Colonic mucosa (tissue), 4 donors: ENCODE measurements at regions of chr1 and their contacts with region 1.

Region 1: DNA sequence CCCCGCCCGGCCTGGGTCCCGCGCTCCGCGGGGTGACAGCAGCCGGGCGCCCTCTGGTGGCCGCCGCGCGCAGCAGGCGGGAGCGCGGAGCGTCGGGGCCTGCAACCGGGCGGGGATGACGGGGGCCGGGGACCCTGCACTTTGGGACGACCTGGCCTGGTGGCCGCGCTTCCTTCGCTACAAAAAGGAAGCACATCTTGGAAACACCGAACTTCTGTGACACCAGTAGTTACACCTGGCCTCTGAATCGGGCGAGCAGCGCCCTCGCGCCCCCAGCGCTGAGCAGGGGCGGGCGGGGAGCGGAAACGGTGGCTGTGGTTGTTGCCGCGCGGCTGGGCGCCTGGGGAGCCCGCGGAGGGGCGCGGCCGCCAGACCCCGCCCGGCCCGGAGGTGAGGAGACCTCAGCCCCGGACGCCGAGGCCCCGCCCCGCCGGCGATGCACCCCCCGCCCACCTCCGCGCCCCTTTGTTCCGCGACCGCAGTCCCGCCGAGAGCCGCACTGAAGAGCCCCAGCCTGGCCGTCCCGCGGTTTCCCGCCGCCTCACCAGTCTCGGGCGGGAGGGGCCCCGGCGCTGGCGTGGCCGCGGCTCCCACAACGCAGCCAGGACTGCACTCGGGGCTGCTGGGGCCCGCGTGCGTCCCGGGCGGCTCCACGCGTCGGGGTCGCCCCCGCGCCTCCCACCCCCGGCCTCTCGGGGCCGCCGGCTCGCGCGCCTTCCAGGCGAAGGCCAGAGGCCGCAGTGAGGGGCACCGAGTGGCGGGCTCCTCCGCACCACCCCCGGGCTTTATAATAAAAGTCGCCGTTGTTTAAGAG is 59.3 kb downstream of the H3-3A start:
- DNase-seq: peak; percentile 75
- H3K4me3 ChIP-seq: peak overlapping the region; percentile 66
- H3K27ac ChIP-seq: peak overlapping the region; percentile 98
- H3K4me1 ChIP-seq: peaks cover 6% of the 10 kb centered on the region
- H3K27me3 ChIP-seq: no peaks in the 10 kb centered on the region
- CTCF ChIP-seq: peak; percentile 60

Region 2: GRCh38 chr1:225567590-225568194 is 554.1 kb before region 1 on chr1:
- intact Hi-C with region 1: no loop called
- DNase-seq: no peak
- H3K4me3 ChIP-seq: no peak overlapping the region
- H3K27ac ChIP-seq: no peak overlapping the region
- H3K4me1 ChIP-seq: no peaks in the 10 kb centered on the region
- H3K27me3 ChIP-seq: no peaks in the 10 kb centered on the region
- CTCF ChIP-seq: no peak

Region 3: DNA sequence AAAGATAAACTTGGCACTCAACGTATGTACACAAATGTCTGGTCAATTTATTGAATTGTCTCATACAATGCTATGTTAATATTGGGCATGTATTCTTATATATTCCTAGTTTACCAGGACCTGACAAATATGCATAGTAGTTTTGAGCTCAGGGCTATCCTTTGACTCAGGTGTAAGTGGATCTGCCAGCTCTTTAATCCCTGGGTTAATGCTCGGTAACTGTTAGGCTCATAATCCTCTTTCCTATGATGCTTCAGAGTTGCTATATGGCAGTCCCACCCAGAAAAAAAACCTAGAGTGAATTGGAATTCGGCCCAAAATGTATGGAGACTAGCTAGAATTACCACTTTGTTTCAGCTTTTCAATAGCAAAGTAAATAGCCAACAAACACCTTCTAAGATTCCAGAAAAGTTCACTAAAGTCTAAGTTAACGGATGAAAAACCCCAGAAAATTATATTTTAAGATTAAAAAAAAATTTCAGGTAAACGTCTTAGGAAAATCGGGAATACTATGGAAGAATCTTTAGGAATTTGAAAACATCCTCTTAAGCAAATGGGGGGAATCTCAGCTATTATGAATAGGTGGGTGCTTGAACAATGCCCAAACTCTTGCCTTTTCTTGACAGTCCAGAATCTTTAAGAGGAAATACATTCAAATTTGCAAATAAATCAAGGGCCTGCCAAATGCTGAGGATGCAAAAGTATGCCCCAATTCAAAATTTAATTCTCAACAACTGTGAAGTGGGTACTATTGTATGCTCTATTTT is 48.4 kb before region 1 on chr1:
- intact Hi-C with region 1: no loop called
- DNase-seq: no peak
- H3K4me3 ChIP-seq: no peak overlapping the region
- H3K27ac ChIP-seq: no peak overlapping the region
- H3K4me1 ChIP-seq: no peaks in the 10 kb centered on the region
- H3K27me3 ChIP-seq: no peaks in the 10 kb centered on the region
- CTCF ChIP-seq: no peak

Region 4: DNA sequence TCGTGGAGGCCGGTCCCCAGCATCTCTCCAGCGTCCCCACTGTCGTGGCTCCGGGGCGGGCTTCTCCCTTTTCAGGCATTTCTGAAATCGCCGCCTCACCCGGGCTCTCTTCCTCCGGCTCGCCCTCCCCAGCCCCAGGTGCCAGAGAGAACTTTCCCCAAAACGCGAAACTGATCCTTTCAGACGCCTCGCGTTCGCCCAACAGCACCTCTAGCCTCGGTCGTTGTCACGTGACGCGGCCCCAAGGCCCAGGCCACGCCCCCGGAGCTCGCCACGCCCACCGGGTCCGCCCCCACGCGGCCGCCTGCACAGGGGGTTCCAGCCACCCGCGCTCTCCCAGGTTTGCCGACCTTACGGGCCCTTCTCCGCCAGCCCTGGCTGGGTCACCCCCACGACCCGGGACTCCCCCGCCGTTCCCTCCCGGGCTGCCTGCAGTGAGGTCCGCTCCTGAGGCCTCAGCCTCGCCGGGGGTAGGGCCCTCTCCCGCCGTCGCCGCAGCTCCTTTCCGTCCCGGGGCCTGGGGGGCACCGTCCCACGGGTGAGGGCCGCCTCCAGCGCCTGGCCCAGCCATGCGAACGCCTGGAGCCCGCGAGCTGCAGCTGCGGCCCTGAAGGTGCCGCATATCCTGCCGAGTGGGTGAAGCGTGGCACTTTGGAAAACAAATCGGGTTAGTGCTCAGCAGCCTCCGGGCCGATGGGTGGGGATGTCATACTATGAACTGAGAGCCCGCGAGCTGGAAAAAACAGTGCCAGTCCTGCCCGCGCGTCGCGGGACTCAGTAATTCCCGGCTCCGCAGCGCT is 38.3 kb before region 1 on chr1:
- intact Hi-C with region 1: loop called (anchors 5 kb)
- DNase-seq: peak; percentile 97
- H3K4me3 ChIP-seq: peak overlapping the region; percentile 89
- H3K27ac ChIP-seq: peak overlapping the region; percentile 61
- H3K4me1 ChIP-seq: no peaks in the 10 kb centered on the region
- H3K27me3 ChIP-seq: no peaks in the 10 kb centered on the region
- CTCF ChIP-seq: no peak

Region 5: GRCh38 chr1:226308723-226309315 is 187.0 kb after region 1 on chr1 and contains the start of gene LIN9:
- intact Hi-C with region 1: no loop called
- DNase-seq: peak; percentile 96
- H3K4me3 ChIP-seq: peak within 1 kb of the TSS; percentile 64
- H3K27ac ChIP-seq: peak within 1 kb of the TSS; percentile 39
- H3K4me1 ChIP-seq: peaks cover 8% of the 10 kb centered on the region
- H3K27me3 ChIP-seq: no peaks in the 10 kb centered on the region
- CTCF ChIP-seq: no peak
- total RNA-seq, gene LIN9: 3.5 to 7.1 TPM